Naive thymus-derived CD4-positive, alpha-beta T cell (primary cell): ENCODE measurements at regions of chr1 and their contacts with region 1.

Region 1: GRCh38 chr1:230066466-230067404 is at the start of gene GALNT2:
- DNase-seq: peak; percentile 86 to 91 (median 89)
- ATAC-seq: peak; percentile 96
- H3K4me3 ChIP-seq: peak within 1 kb of the TSS; percentile 59
- H3K4me3 Mint-ChIP-seq: peak within 1 kb of the TSS; percentile 88 to 97 (median 92)
- H3K27ac ChIP-seq: peak within 1 kb of the TSS; percentile 82
- H3K27ac Mint-ChIP-seq: peak within 1 kb of the TSS; percentile 88 to 97 (median 91)
- H3K4me1 ChIP-seq: no peaks in the 10 kb centered on the region
- H3K4me1 Mint-ChIP-seq: peaks cover 15 to 48% (median 38%) of the 10 kb centered on the region in 7 donors
- H3K27me3 ChIP-seq: no peaks in the 10 kb centered on the region
- H3K27me3 Mint-ChIP-seq: peaks cover 0 to 10% (median 0%) of the 10 kb centered on the region in 5 donors
- total RNA-seq, gene GALNT2: 18.7 to 32.7 (median 26.4) TPM

Region 2: DNA sequence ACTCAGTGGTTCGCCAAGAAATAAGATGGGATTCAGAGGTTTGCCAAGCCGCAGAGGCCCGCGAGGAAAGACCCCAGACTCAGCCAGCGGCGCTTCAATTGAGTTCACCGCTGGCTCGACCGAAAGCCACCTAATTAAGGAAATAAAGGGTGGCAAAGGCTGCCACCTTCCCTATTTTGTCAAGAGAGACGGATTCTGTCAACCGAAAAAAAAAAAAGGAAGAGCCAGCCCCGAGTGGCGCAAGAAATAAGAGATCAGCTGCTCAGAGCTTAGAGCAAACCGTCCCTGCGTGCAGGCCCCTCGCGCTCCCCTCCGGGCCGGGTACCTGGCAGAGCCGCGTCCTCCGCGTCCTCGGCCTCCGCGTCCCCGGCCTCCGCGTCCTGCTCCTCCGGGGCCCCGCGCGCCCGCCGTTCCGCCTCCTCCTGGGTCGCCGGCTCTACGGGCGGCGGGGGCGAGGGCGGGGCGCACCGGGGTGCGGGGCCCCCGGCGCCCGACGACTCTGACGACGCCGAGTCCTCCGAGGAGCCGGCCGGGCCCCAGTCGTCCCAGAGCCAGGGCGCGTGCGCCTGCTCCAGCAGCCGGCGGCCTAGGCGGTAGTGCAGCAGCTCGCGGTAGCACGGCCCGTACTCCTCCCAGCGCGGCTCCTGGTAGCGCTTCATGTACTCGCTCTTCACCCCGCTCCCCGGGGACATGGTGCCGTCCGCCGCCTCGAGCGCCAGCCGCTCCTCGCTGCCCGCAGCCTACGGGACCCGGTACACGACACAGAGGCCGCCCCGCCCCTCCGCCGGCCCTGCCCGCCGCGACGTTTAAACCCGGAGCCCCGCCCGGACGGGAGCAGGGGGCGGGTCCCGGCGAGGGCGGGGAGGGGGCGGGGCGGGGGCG is 724.7 kb before region 1 on chr1:
- CTCF ChIA-PET with region 1: no interaction called
- POLR2A ChIA-PET with region 1: no interaction called
- intact Hi-C with region 1: loop called (anchors 1 to 2 kb)
- DNase-seq: peak; percentile 78 to 87 (median 84)
- ATAC-seq: peak; percentile 92
- H3K4me3 ChIP-seq: peak overlapping the region; percentile 87
- H3K4me3 Mint-ChIP-seq: peak overlapping the region; percentile 88 to 96 (median 93)
- H3K27ac ChIP-seq: peak overlapping the region; percentile 88
- H3K27ac Mint-ChIP-seq: peak overlapping the region; percentile 72 to 93 (median 89)
- H3K4me1 ChIP-seq: peaks cover 5 to 7% of the 10 kb centered on the region in 2 donors
- H3K4me1 Mint-ChIP-seq: peaks cover 32 to 59% (median 49%) of the 10 kb centered on the region in 7 donors
- H3K27me3 ChIP-seq: no peaks in the 10 kb centered on the region
- H3K27me3 Mint-ChIP-seq: peaks cover 0 to 23% (median 7%) of the 10 kb centered on the region in 5 donors

Region 3: GRCh38 chr1:229661022-229661877 is 405.5 kb before region 1 on chr1:
- CTCF ChIA-PET with region 1: no interaction called
- POLR2A ChIA-PET with region 1: no interaction called
- intact Hi-C with region 1: loop called in 1 of 2 experiments (anchors 5 kb)
- DNase-seq: peak; percentile 38 to 72 (median 67)
- ATAC-seq: peak; percentile 87
- H3K4me3 ChIP-seq: no peak overlapping the region
- H3K4me3 Mint-ChIP-seq: no peak overlapping the region
- H3K27ac ChIP-seq: no peak overlapping the region
- H3K27ac Mint-ChIP-seq: peak overlapping the region in 3 of 9 donors; percentile 8 to 80 (median 66)
- H3K4me1 ChIP-seq: peaks cover 13% of the 10 kb centered on the region in 2 donors
- H3K4me1 Mint-ChIP-seq: peaks cover 0 to 11% (median 5%) of the 10 kb centered on the region in 7 donors
- H3K27me3 ChIP-seq: no peaks in the 10 kb centered on the region
- H3K27me3 Mint-ChIP-seq: no peaks in the 10 kb centered on the region

Region 4: GRCh38 chr1:230047114-230047865 is 19.4 kb before region 1 on chr1:
- CTCF ChIA-PET with region 1: no interaction called
- POLR2A ChIA-PET with region 1: no interaction called
- intact Hi-C with region 1: no loop called
- DNase-seq: no peak
- ATAC-seq: no peak
- H3K4me3 ChIP-seq: no peak overlapping the region
- H3K4me3 Mint-ChIP-seq: no peak overlapping the region
- H3K27ac ChIP-seq: no peak overlapping the region
- H3K27ac Mint-ChIP-seq: no peak overlapping the region
- H3K4me1 ChIP-seq: no peaks in the 10 kb centered on the region
- H3K4me1 Mint-ChIP-seq: peaks cover 3 to 16% (median 6%) of the 10 kb centered on the region in 7 donors
- H3K27me3 ChIP-seq: no peaks in the 10 kb centered on the region
- H3K27me3 Mint-ChIP-seq: peaks cover 9 to 24% (median 21%) of the 10 kb centered on the region in 5 donors

Region 5: GRCh38 chr1:230104395-230105244 is 37.9 kb after region 1 on chr1:
- CTCF ChIA-PET with region 1: no interaction called
- POLR2A ChIA-PET with region 1: no interaction called
- intact Hi-C with region 1: loop called (anchors 2 to 5 kb)
- DNase-seq: peak in 5 of 9 donors; percentile 11 to 75 (median 20)
- ATAC-seq: peak; percentile 81
- H3K4me3 ChIP-seq: no peak overlapping the region
- H3K4me3 Mint-ChIP-seq: peak overlapping the region in 9 of 10 donors; percentile 4 to 49 (median 21)
- H3K27ac ChIP-seq: no peak overlapping the region
- H3K27ac Mint-ChIP-seq: peak overlapping the region in 3 of 9 donors; percentile 4 to 56 (median 30)
- H3K4me1 ChIP-seq: peaks cover 14 to 17% of the 10 kb centered on the region in 2 donors
- H3K4me1 Mint-ChIP-seq: peaks cover 44 to 80% (median 72%) of the 10 kb centered on the region in 7 donors
- H3K27me3 ChIP-seq: no peaks in the 10 kb centered on the region
- H3K27me3 Mint-ChIP-seq: no peaks in the 10 kb centered on the region

Region 6: DNA sequence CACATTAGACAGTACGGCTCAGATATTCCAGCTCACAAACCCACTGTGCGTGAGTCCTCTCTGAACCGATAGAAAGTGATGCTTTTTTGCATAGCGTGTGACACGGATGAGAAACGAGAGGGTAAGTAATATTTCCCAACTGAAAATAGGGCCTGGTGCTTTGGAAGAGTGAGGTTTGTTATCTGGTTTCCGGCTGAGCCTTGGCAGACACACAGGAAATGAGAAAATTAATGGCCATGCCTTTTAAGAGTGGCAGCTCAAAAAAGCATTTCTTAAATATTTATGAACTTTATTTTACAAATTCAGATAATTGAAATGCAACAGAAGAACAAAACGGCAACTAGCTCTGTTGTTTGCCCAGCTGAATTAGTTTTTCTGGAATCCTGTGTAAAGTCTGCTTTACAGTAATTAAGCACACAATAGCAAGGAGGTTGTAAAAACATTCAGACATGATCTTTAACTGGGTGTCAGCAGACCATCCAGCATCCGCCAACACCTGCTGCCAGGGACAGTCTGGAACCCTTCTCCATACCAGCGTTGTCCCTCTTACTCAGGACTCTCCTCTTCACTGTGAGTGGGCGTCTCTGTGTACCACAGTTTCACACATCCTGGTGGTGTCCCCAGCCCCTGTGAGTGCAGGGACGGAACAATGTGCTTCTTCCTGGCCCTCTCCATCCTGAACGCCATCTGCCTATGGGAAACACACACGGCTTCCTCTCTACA is 204.0 kb after region 1 on chr1:
- CTCF ChIA-PET with region 1: no interaction called
- POLR2A ChIA-PET with region 1: no interaction called
- intact Hi-C with region 1: loop called (anchors 5 kb)
- DNase-seq: no peak
- ATAC-seq: no peak
- H3K4me3 ChIP-seq: no peak overlapping the region
- H3K4me3 Mint-ChIP-seq: peak overlapping the region in 8 of 10 donors; percentile 17 to 72 (median 50)
- H3K27ac ChIP-seq: peak overlapping the region; percentile 10
- H3K27ac Mint-ChIP-seq: peak overlapping the region; percentile 30 to 90 (median 63)
- H3K4me1 ChIP-seq: peaks cover 4 to 9% of the 10 kb centered on the region in 2 donors
- H3K4me1 Mint-ChIP-seq: peaks cover 10 to 56% (median 39%) of the 10 kb centered on the region in 7 donors
- H3K27me3 ChIP-seq: no peaks in the 10 kb centered on the region
- H3K27me3 Mint-ChIP-seq: no peaks in the 10 kb centered on the region

Region 7: GRCh38 chr1:230867903-230868735 is 801.4 kb after region 1 on chr1 and contains the start of gene C1orf198:
- CTCF ChIA-PET with region 1: no interaction called
- POLR2A ChIA-PET with region 1: no interaction called
- intact Hi-C with region 1: loop called in 1 of 2 experiments (anchors 5 kb)
- DNase-seq: peak; percentile 48 to 84 (median 69)
- ATAC-seq: peak; percentile 97
- H3K4me3 ChIP-seq: peak within 1 kb of the TSS; percentile 76
- H3K4me3 Mint-ChIP-seq: peak within 1 kb of the TSS; percentile 70 to 94 (median 88)
- H3K27ac ChIP-seq: peak within 1 kb of the TSS; percentile 67
- H3K27ac Mint-ChIP-seq: peak within 1 kb of the TSS in 8 of 9 donors; percentile 29 to 84 (median 62)
- H3K4me1 ChIP-seq: peaks cover 0 to 5% of the 10 kb centered on the region in 2 donors
- H3K4me1 Mint-ChIP-seq: peaks cover 10 to 33% (median 24%) of the 10 kb centered on the region in 7 donors
- H3K27me3 ChIP-seq: peaks cover 0 to 7% of the 10 kb centered on the region in 2 donors
- H3K27me3 Mint-ChIP-seq: peaks cover 13 to 38% (median 25%) of the 10 kb centered on the region in 5 donors
- total RNA-seq, gene C1orf198: 2.9 to 6.0 (median 3.7) TPM